Activated CD8-positive, alpha-beta T cell treated with anti-CD3 and anti-CD28 coated beads for 36 hours (primary cell): ENCODE measurements at regions of chr17 and their contacts with region 1.

Region 1: DNA sequence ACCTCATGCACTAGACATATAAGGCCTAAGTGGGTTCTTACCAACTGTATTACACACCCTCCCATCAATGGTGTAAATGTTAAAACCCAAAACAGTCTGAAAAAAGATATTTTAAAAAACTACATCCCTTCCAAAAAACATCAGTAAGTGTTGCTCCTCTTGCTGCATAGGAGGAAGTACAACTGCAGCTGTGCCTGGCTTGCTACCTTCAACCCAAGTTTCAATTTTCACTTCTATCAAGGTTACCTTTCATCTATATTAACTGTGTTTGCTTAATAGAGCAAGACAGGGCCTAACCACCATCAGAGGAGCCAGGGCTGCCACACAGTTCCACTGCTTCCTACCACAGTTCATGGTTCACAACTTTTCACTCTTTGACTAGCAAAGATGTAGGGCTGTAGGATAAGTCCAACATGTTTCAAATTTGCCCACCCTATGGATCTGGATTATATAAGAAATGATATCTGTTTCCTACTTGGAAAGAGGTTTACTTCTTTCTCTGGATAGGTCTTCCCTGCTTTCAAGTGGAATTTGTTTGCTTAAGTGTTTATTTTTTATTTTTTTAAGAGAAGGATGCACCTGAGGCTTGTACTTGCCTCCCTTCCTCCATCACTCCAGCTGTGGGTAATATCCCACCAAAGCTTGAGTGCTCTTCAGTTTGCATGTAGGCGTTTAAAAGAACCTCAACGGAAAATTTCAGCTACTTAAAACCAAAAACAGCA is 56.7 kb downstream of the GRB7 start:
- DNase-seq: peak; percentile 62
- ATAC-seq: peak; percentile 58
- H3K4me3 Mint-ChIP-seq: peak overlapping the region; percentile 9
- H3K27ac Mint-ChIP-seq: peak overlapping the region; percentile 84
- H3K4me1 Mint-ChIP-seq: peaks cover 75% of the 10 kb centered on the region
- H3K27me3 Mint-ChIP-seq: no peaks in the 10 kb centered on the region
- CTCF ChIP-seq: no peak

Region 2: DNA sequence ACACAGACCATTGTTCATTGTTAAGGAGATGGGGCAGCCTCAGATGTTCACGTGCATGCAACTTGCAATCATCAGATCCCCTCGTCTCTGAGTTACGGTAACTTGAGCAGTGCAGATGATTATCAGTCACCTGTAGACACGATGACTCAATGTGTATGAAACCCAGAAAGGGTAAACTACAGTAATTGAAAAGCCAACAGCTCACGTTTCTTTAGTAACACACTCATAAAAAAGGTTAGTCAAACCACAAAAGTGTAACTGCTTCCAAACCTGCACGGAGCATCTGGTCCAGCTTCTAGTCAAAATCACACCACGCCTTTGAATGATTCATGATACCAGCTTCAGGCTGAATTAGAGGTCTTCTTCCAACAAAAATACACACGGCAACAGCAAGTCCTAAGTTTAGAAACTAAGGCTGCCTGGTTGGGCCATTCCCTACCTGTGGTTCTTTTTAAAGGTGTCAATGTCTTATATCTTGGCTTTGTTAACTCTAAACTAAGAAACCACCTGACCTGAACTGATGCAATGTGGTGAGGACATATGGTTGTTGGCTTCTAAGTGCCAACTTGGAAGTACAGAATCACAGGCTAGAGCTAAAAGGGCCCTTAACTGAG is 24.3 kb before region 1 on chr17:
- CTCF ChIA-PET with region 1: interaction called, 3 read pairs
- POLR2A ChIA-PET with region 1: interaction called, 21 read pairs
- intact Hi-C with region 1: loop called (anchors 2 kb)
- DNase-seq: peak; percentile 84
- ATAC-seq: peak; percentile 81
- H3K4me3 Mint-ChIP-seq: peak overlapping the region; percentile 18
- H3K27ac Mint-ChIP-seq: peak overlapping the region; percentile 90
- H3K4me1 Mint-ChIP-seq: peaks cover 95% of the 10 kb centered on the region
- H3K27me3 Mint-ChIP-seq: no peaks in the 10 kb centered on the region
- CTCF ChIP-seq: no peak

Region 3: DNA sequence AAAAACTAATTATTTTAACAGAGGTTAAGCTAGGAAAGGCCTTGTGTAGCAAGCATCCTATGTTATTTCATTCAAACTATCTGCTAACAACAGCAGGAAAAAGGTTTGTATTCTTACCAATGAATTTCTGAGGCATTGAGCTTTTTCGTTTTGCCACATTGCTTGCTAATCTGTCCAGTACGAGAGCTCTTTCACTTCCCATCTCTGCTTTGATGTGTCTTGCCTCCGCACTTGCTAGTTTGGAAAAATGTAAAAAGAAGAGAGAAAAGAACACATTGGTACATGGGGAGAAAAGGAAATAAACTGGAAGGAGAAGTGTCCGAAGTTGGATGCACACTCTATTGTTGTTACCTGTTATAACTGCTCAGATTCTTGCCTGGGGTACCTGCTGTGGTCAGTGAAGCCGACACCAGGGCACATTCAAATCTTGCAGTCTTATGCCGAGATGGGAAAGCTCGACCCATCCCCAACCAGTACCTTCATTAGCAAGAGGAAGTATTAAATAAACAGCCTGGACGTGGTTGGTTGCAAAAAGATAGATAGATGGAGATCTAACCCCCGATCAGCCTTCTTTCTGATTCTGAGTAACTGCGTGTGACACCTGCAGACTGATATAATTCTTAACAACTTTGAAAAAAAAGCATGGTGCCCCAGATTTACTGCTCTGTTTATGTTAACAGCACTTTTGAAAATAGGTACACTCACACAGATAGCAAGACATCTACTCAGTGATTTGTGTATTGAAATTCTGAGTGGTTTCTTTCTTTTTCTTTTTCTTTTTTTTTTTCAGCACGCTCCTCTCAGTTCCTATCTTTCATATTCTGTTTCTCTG is 16.7 kb before region 1 on chr17:
- CTCF ChIA-PET with region 1: interaction called, 14 read pairs
- POLR2A ChIA-PET with region 1: interaction called, 6 read pairs
- intact Hi-C with region 1: loop called (anchors 2 kb)
- DNase-seq: peak; percentile 28
- ATAC-seq: peak; percentile 67
- H3K4me3 Mint-ChIP-seq: peak overlapping the region; percentile 70
- H3K27ac Mint-ChIP-seq: peak overlapping the region; percentile 85
- H3K4me1 Mint-ChIP-seq: peaks cover 83% of the 10 kb centered on the region
- H3K27me3 Mint-ChIP-seq: no peaks in the 10 kb centered on the region
- CTCF ChIP-seq: no peak

Region 4: GRCh38 chr17:39841134-39841683 is 46.8 kb after region 1 on chr17:
- CTCF ChIA-PET with region 1: no interaction called
- POLR2A ChIA-PET with region 1: no interaction called
- intact Hi-C with region 1: loop called (anchors 5 kb)
- DNase-seq: no peak
- ATAC-seq: no peak
- H3K4me3 Mint-ChIP-seq: no peak overlapping the region
- H3K27ac Mint-ChIP-seq: peak overlapping the region; percentile 55
- H3K4me1 Mint-ChIP-seq: peaks cover 51% of the 10 kb centered on the region
- H3K27me3 Mint-ChIP-seq: no peaks in the 10 kb centered on the region
- CTCF ChIP-seq: no peak

Region 5: GRCh38 chr17:39872751-39873150 is 78.3 kb after region 1 on chr17:
- CTCF ChIA-PET with region 1: no interaction called
- POLR2A ChIA-PET with region 1: no interaction called
- intact Hi-C with region 1: no loop called
- DNase-seq: no peak
- ATAC-seq: no peak
- H3K4me3 Mint-ChIP-seq: no peak overlapping the region
- H3K27ac Mint-ChIP-seq: no peak overlapping the region
- H3K4me1 Mint-ChIP-seq: peaks cover 5% of the 10 kb centered on the region
- H3K27me3 Mint-ChIP-seq: no peaks in the 10 kb centered on the region
- CTCF ChIP-seq: no peak